Right cardiac atrium (tissue), 5 donors: ENCODE measurements at regions of chr4 and their contacts with region 1.

Region 1: GRCh38 chr4:19224820-19225219 is 1026.9 kb upstream of the SLIT2 start:
- DNase-seq: no peak
- ATAC-seq: no peak
- H3K4me3 ChIP-seq: no peak overlapping the region
- H3K27ac ChIP-seq: no peak overlapping the region
- H3K4me1 ChIP-seq: no peaks in the 10 kb centered on the region
- H3K27me3 ChIP-seq: no peaks in the 10 kb centered on the region

Region 2: DNA sequence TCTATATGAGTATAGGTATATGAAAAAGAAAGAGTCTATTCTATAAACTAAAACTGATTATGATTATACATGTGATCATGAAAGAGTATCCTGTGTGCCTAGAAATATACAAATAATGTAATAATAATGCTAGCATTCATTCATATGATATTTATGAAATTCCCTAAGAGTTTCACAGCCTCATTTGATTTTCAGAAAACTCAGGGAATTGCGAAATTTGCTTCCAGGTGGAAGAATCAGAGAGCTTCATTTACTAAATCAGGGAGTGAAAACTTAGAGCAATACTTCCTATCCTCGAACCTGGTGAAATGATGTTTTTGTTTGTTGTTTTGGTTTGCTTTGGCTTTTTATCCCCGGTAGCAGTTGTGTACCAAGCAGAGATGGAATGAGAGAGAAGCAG is 78.8 kb before region 1 on chr4:
- intact Hi-C with region 1: no loop called
- DNase-seq: no peak
- ATAC-seq: no peak
- H3K4me3 ChIP-seq: no peak overlapping the region
- H3K27ac ChIP-seq: no peak overlapping the region
- H3K4me1 ChIP-seq: no peaks in the 10 kb centered on the region
- H3K27me3 ChIP-seq: no peaks in the 10 kb centered on the region

Region 3: DNA sequence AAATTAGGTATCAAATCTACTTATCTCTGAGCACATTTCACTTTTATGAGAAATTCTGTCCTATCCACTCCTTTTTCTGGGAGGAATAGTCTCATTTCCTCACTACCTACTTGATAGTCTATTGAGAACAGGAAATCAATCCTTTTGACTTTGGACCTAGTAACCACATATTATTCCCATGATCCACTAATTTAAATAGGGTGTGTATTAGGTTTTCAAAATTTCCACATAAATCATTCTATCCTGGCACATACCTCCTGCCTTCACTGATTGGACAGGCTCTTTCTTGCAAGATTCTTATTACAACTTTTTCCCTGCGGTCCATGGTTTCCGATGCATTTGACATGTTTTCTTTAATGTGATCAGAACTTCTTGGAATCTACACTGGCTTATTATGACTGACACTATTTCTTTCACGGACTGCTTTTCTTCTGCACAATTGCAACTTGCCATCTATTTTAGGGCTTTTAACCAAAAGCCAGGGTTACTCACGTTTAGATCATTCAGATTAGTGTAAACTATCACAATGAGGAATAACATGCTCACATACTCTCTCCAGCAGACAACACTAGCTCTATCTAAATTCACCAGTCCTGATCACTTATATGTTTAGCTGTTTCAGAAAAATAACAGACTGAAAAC is 606.9 kb after region 1 on chr4:
- intact Hi-C with region 1: no loop called
- DNase-seq: no peak
- ATAC-seq: no peak
- H3K4me3 ChIP-seq: no peak overlapping the region
- H3K27ac ChIP-seq: no peak overlapping the region
- H3K4me1 ChIP-seq: no peaks in the 10 kb centered on the region
- H3K27me3 ChIP-seq: no peaks in the 10 kb centered on the region

Region 4: GRCh38 chr4:20251796-20252655 is 1027.2 kb after region 1 on chr4 and contains the start of gene SLIT2:
- intact Hi-C with region 1: loop called in 2 of 4 experiments (anchors 10 kb)
- DNase-seq: peak; percentile 87 to 94 (median 93)
- ATAC-seq: peak; percentile 94 to 95
- H3K4me3 ChIP-seq: peak within 1 kb of the TSS; percentile 37
- H3K27ac ChIP-seq: peak within 1 kb of the TSS; percentile 9
- H3K4me1 ChIP-seq: no peaks in the 10 kb centered on the region
- H3K27me3 ChIP-seq: no peaks in the 10 kb centered on the region
- total RNA-seq, gene SLIT2: 10.2 to 13.8 (median 10.9) TPM